Activated naive CD8-positive, alpha-beta T cell treated with anti-CD3 and anti-CD28 coated beads, Interleukin-2, amount 10 ng/mL, durations not matched to agents 7 days and 5 days (primary cell): ENCODE measurements at regions of chrX and their contacts with region 1.

Region 1: DNA sequence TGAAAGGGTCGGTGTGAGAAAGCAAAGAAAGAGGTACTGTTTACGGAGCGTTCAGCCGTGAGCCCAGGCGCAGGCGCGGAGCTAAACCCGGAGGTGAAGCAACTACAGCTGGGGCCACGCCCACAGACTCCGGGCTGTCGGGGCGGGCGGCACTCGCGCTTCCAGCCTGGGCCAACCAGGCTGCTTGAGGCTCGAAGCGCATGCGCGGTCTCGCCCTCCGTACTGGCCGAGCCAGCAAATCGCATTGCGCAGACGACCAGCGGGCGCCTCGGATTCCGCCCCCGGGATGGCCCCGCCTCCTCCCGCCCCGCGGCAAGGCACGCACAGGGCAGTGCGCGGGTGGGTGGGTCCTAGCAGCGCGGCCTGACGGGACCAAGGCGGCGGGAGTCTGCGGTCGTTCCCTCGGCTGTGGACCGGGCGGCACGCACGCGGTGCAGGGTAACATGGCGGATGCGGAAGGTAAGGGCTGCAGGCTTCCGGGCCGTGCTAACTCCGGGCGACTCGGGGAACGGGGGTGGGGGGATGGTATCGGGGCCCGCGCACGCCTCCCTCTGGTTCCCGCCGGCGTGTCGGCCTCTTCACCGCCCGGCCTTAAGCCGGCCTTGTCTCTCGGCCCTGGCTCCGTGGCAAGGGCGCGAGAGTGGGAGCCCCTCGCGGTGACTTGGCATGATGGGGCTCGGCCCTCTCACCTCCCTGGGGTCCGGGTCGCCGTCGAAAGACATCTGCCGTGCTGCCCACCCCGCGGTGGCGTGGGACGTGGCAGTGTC is at the start of gene DKC1:
- DNase-seq: peak; percentile 94
- ATAC-seq: peak; percentile 94
- H3K4me3 Mint-ChIP-seq: peak within 1 kb of the TSS; percentile 84
- H3K27ac Mint-ChIP-seq: peak within 1 kb of the TSS; percentile 89
- H3K4me1 Mint-ChIP-seq: peaks cover 23% of the 10 kb centered on the region
- H3K27me3 Mint-ChIP-seq: no peaks in the 10 kb centered on the region
- total RNA-seq, gene DKC1: 67.2 to 70.5 TPM

Region 2: GRCh38 chrX:154750301-154751202 is 12.2 kb before region 1 on chrX and contains the start of gene GAB3:
- POLR2A ChIA-PET with region 1: interaction called, 20 read pairs
- DNase-seq: peak; percentile 70
- ATAC-seq: peak; percentile 72
- H3K4me3 Mint-ChIP-seq: peak within 1 kb of the TSS; percentile 84
- H3K27ac Mint-ChIP-seq: peak within 1 kb of the TSS; percentile 48
- H3K4me1 Mint-ChIP-seq: peaks cover 16% of the 10 kb centered on the region
- H3K27me3 Mint-ChIP-seq: no peaks in the 10 kb centered on the region
- total RNA-seq, gene GAB3: 17.7 to 18.7 TPM

Region 3: DNA sequence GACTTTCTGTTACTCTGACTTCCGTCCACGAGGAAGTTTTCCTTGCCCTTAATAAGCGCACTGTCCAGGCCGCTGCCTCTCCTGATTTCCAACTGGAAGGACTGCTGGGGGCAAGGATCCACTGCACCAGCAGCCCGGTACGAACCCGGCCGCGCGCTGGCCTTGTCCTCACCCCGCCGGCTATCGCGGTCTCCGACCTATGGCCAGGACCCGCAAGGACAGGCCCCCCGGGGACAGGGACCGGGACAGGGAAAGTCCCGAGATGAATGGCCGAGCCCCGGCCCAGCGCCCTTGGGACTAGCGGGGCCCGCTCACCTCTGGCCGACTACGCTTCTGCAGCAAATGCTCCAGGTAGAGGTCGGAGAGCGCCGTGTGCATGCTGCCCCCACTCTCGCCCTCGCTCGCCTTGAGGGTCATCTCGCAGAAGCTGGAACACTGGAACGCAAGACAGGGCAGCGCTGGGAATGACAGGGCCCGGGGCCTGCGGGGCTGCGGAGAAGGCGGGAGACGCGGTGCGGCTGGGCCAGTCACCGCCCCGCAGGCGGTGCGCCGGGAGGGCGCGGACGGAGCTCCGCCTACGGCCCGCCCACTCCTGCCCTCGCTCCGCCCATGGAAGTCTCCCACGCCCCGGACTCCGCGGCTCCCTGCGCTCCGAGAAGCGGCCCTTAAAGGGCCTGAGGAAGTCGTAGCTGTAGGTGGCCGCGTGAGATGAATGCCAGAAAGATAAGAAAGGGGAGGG is 42.4 kb after region 1 on chrX and contains the start of gene MPP1:
- POLR2A ChIA-PET with region 1: interaction called, 10 read pairs
- DNase-seq: peak; percentile 86
- ATAC-seq: peak; percentile 85
- H3K4me3 Mint-ChIP-seq: peak within 1 kb of the TSS; percentile 82
- H3K27ac Mint-ChIP-seq: peak within 1 kb of the TSS; percentile 82
- H3K4me1 Mint-ChIP-seq: peaks cover 31% of the 10 kb centered on the region
- H3K27me3 Mint-ChIP-seq: peaks cover 2% of the 10 kb centered on the region
- total RNA-seq, gene MPP1: 59.8 to 64.9 TPM